HCT116 (cell line): ENCODE measurements at regions of chr20 and their contacts with region 1.

Region 1: GRCh38 chr20:57596998-57597939 is 23.0 kb downstream of the ZBP1 start:
- DNase-seq: peak; percentile 8
- ATAC-seq: peak; percentile 91
- H3K4me3 ChIP-seq: no peak overlapping the region
- H3K27ac ChIP-seq: no peak overlapping the region
- H3K4me1 ChIP-seq: peaks cover 0 to 7% of the 10 kb centered on the region in 2 experiments; a peak in 1 of 4 replicates
- H3K27me3 ChIP-seq: no peaks in the 10 kb centered on the region
- CTCF ChIP-seq: peak; percentile 84 to 94 (median 91)
- POLR2A ChIP-seq: no peak
- RAD21 ChIP-seq: peak; percentile 91

Region 2: GRCh38 chr20:57388953-57389694 is 208.1 kb before region 1 on chr20:
- CTCF ChIA-PET with region 1: no interaction called
- POLR2A ChIA-PET with region 1: no interaction called
- RAD21 ChIA-PET with region 1: no interaction called
- intact Hi-C with region 1: loop called (anchors 10 kb)
- DNase-seq: peak; percentile 26
- ATAC-seq: peak; percentile 73
- H3K4me3 ChIP-seq: peak overlapping the region; percentile 35 to 50
- H3K27ac ChIP-seq: peak overlapping the region; percentile 75
- H3K4me1 ChIP-seq: peaks cover 24 to 38% of the 10 kb centered on the region in 2 experiments
- H3K27me3 ChIP-seq: no peaks in the 10 kb centered on the region
- CTCF ChIP-seq: peak in 1 of 3 experiments; percentile 24; a peak in 2 of 6 replicates
- POLR2A ChIP-seq: peak; percentile 21
- RAD21 ChIP-seq: no peak

Region 3: GRCh38 chr20:57514273-57514751 is 83.0 kb before region 1 on chr20:
- CTCF ChIA-PET with region 1: interaction called, 14 read pairs
- POLR2A ChIA-PET with region 1: no interaction called
- RAD21 ChIA-PET with region 1: interaction called in 1 of 2 experiments, 5 read pairs
- intact Hi-C with region 1: loop called (anchors 1 kb)
- DNase-seq: peak; percentile 58
- ATAC-seq: peak; percentile 65
- H3K4me3 ChIP-seq: no peak overlapping the region
- H3K27ac ChIP-seq: no peak overlapping the region
- H3K4me1 ChIP-seq: peaks cover 0 to 4% of the 10 kb centered on the region in 2 experiments; a peak in 1 of 4 replicates
- H3K27me3 ChIP-seq: 0 out of 2 replicates have a peak, but pooled peaks cover 8% of the 10 kb centered on the region
- CTCF ChIP-seq: peak; percentile 66 to 92 (median 81)
- POLR2A ChIP-seq: no peak
- RAD21 ChIP-seq: peak; percentile 91

Region 4: GRCh38 chr20:58179432-58180099 is 582.3 kb after region 1 on chr20:
- CTCF ChIA-PET with region 1: interaction called, 7 read pairs
- POLR2A ChIA-PET with region 1: no interaction called
- RAD21 ChIA-PET with region 1: no interaction called
- intact Hi-C with region 1: loop called (anchors 10 kb)
- DNase-seq: no peak
- ATAC-seq: peak; percentile 94
- H3K4me3 ChIP-seq: peak overlapping the region; percentile 32 to 50
- H3K27ac ChIP-seq: no peak overlapping the region
- H3K4me1 ChIP-seq: peaks cover 0 to 11% of the 10 kb centered on the region in 2 experiments; a peak in 2 of 4 replicates
- H3K27me3 ChIP-seq: no peaks in the 10 kb centered on the region; the same call in 1 of the 2 replicates
- CTCF ChIP-seq: peak; percentile 71 to 93 (median 89); a peak in 5 of 6 replicates
- POLR2A ChIP-seq: no peak
- RAD21 ChIP-seq: peak; percentile 89

Region 5: GRCh38 chr20:58209652-58210397 is 612.6 kb after region 1 on chr20:
- CTCF ChIA-PET with region 1: interaction called, 5 read pairs
- POLR2A ChIA-PET with region 1: no interaction called
- RAD21 ChIA-PET with region 1: no interaction called
- intact Hi-C with region 1: loop called (anchors 1 kb)
- DNase-seq: peak; percentile 52
- ATAC-seq: peak; percentile 93
- H3K4me3 ChIP-seq: no peak overlapping the region
- H3K27ac ChIP-seq: no peak overlapping the region
- H3K4me1 ChIP-seq: no peaks in the 10 kb centered on the region
- H3K27me3 ChIP-seq: no peaks in the 10 kb centered on the region
- CTCF ChIP-seq: peak; percentile 100
- POLR2A ChIP-seq: no peak
- RAD21 ChIP-seq: peak; percentile 99